IMR-90 (cell line): ENCODE measurements at regions of chr1 and their contacts with region 1.

Region 1: GRCh38 chr1:177959811-177960515 is 9.9 kb downstream of the SEC16B start:
- DNase-seq: peak; percentile 68
- ATAC-seq: peak; percentile 91
- H3K4me3 ChIP-seq: no peak overlapping the region
- H3K27ac ChIP-seq: no peak overlapping the region
- H3K4me1 ChIP-seq: peaks cover 15% of the 10 kb centered on the region
- H3K27me3 ChIP-seq: no peaks in the 10 kb centered on the region
- CTCF ChIP-seq: peak; percentile 66
- POLR2A ChIP-seq: no peak
- RAD21 ChIP-seq: peak; percentile 79

Region 2: GRCh38 chr1:177864538-177865305 is 95.2 kb before region 1 on chr1:
- CTCF ChIA-PET with region 1: no interaction called
- POLR2A ChIA-PET with region 1: no interaction called
- dilution Hi-C with region 1: no loop called
- in situ Hi-C with region 1: no loop called
- intact Hi-C with region 1: no loop called
- DNase-seq: no peak
- ATAC-seq: no peak
- H3K4me3 ChIP-seq: no peak overlapping the region
- H3K27ac ChIP-seq: no peak overlapping the region
- H3K4me1 ChIP-seq: peaks cover 2% of the 10 kb centered on the region; the same call in 1 of the 2 replicates
- H3K27me3 ChIP-seq: no peaks in the 10 kb centered on the region
- CTCF ChIP-seq: no peak
- POLR2A ChIP-seq: no peak
- RAD21 ChIP-seq: no peak

Region 3: DNA sequence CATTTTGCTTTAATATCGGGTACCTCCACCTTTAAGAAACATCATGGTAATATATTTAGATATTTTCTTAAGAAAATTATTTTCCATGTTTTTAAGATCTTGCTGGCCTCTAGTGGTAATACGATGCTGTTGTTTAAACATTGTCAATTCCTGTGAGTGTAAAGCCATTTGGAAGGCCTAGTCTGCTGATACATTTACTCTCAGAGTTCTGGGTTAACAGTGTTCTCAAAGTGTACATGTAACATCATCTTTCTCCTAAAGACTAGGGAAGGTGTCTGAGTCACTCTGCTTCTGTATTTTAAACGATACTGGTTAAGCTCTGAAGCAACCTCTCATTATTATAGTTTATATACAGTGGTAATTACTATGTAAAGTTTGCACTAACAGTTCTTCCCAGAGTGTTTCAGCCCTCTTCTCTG is 323.0 kb after region 1 on chr1:
- CTCF ChIA-PET with region 1: no interaction called
- POLR2A ChIA-PET with region 1: no interaction called
- dilution Hi-C with region 1: no loop called
- in situ Hi-C with region 1: loop called (anchors 5 kb)
- intact Hi-C with region 1: loop called (anchors 1 kb)
- DNase-seq: peak; percentile 86
- ATAC-seq: peak; percentile 91
- H3K4me3 ChIP-seq: no peak overlapping the region
- H3K27ac ChIP-seq: no peak overlapping the region
- H3K4me1 ChIP-seq: peaks cover 13% of the 10 kb centered on the region
- H3K27me3 ChIP-seq: no peaks in the 10 kb centered on the region
- CTCF ChIP-seq: peak; percentile 70
- POLR2A ChIP-seq: no peak
- RAD21 ChIP-seq: peak; percentile 75

Region 4: DNA sequence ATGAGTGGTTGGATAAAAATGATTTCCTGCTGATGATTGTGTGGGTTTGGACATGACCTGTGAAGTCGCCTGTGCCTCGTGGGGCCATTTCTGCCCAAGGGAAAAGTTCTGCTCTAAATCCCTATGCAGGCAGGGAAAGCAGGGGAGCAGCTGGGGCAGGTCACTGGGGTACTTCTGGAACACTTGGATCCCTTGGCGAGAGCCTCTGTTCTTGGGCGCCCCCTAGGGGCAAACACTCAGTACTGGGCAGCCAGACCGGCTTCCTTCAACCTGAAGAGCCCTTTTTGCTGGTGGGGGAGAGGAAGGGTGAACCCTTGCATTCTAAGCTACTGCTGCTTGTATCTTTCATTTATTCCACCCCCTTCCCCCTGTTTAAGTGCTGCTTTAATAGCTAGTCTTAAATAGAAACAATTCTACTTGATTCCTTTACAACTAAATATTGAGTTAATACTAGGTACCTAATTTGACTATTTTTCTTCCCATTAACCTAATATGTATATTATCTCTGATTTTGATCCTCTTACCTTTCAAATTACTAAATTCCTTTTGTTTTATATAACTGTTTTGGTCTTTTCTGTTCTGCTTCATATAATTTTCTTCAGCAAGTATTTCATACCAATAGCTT is 541.9 kb after region 1 on chr1:
- CTCF ChIA-PET with region 1: no interaction called
- POLR2A ChIA-PET with region 1: no interaction called
- dilution Hi-C with region 1: no loop called
- in situ Hi-C with region 1: no loop called
- intact Hi-C with region 1: loop called (anchors 10 kb)
- DNase-seq: peak; percentile 64
- ATAC-seq: peak; percentile 97
- H3K4me3 ChIP-seq: no peak overlapping the region
- H3K27ac ChIP-seq: no peak overlapping the region
- H3K4me1 ChIP-seq: no peaks in the 10 kb centered on the region
- H3K27me3 ChIP-seq: peaks cover 5% of the 10 kb centered on the region; the same call in 1 of the 2 replicates
- CTCF ChIP-seq: peak; percentile 87
- POLR2A ChIP-seq: no peak
- RAD21 ChIP-seq: peak; percentile 71

Region 5: GRCh38 chr1:178599745-178600144 is 639.8 kb after region 1 on chr1:
- CTCF ChIA-PET with region 1: no interaction called
- POLR2A ChIA-PET with region 1: no interaction called
- dilution Hi-C with region 1: no loop called
- in situ Hi-C with region 1: no loop called
- intact Hi-C with region 1: loop called (anchors 5 kb)
- DNase-seq: no peak
- ATAC-seq: no peak
- H3K4me3 ChIP-seq: no peak overlapping the region
- H3K27ac ChIP-seq: no peak overlapping the region
- H3K4me1 ChIP-seq: no peaks in the 10 kb centered on the region
- H3K27me3 ChIP-seq: no peaks in the 10 kb centered on the region
- CTCF ChIP-seq: no peak
- POLR2A ChIP-seq: no peak
- RAD21 ChIP-seq: no peak